ENCODE measurements at regions of chr14 and their contacts with region 1.

Region 1: GRCh38 chr14:92135267-92135666 is 13.5 kb downstream of the CPSF2 start:
- DNase-seq: peak; percentile 49
- H3K4me3 ChIP-seq: no peak overlapping the region
- H3K27ac ChIP-seq: no peak overlapping the region
- H3K4me1 ChIP-seq: no peaks in the 10 kb centered on the region
- H3K27me3 ChIP-seq: no peaks in the 10 kb centered on the region
- CTCF ChIP-seq: peak; percentile 14 to 35
- POLR2A ChIP-seq: no peak

Region 2: DNA sequence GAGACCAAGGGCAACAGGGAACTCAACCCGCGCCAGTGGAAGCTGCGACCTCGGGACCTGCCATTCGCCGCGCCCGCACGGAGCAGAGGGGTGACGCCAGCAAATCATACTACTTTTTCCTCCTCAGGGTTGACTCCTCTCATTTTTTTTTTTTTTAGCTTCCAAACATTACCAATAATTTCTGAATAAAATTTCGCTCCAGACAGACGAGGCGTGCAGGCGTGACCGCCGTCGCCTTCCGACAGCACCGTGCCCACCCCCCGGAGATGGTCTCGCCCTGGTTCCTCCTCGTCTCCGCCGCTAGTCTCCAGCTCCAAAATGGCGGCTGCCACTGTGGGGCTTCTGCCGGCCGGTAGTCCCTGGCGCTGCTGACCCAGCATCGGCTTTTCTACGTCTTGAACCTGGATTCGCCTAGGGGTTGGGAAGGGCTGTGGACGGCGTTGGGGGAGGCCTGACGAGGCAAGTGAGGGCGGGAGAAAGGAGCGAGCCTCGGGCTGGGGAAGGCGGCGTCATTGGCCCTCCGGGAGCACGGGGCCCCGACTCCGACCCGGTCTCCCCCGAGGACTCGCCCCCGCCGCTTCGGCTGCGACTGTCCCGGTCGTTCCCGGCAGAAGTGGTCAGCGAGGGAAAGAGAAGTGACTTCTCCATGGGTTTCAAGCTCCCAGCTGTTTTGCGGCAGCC is 13.5 kb before region 1 on chr14 and contains the starts of genes CPSF2 and NDUFB1:
- CTCF ChIA-PET with region 1: interaction called, 14 read pairs
- POLR2A ChIA-PET with region 1: no interaction called
- dilution Hi-C with region 1: no loop called
- intact Hi-C with region 1: no loop called
- DNase-seq: peak; percentile 84
- H3K4me3 ChIP-seq: peak within 1 kb of the TSS; percentile 40 to 89 (median 79)
- H3K27ac ChIP-seq: peak within 1 kb of the TSS; percentile 75
- H3K4me1 ChIP-seq: peaks cover 7% of the 10 kb centered on the region
- H3K27me3 ChIP-seq: no peaks in the 10 kb centered on the region
- CTCF ChIP-seq: no peak
- POLR2A ChIP-seq: peak; percentile 95
- total RNA-seq, gene CPSF2: 76.9 and 81.7 TPM in 2 replicates
- total RNA-seq, gene NDUFB1: 95.2 and 114 TPM in 2 replicates

Region 3: DNA sequence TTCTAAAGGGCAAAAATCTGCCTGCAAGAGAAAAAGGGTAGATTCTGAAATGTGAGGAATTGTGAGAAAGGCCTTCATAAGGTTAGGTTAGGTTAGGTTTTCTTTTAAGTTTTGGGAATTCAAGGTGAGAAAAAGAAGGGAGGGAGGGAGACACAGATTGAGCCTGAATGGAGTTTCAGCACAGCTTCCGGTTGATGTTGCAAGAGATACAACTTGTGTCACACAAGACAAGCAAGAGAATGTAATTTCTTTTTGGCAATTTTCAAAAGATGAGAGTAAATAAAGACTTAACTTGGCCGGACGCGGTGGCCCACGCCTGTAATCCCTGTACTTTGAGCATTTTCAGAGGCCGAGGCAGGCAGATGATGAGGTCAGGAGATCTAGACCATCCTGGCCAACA is 50.3 kb after region 1 on chr14:
- CTCF ChIA-PET with region 1: no interaction called
- POLR2A ChIA-PET with region 1: no interaction called
- dilution Hi-C with region 1: no loop called
- intact Hi-C with region 1: no loop called
- DNase-seq: no peak
- H3K4me3 ChIP-seq: no peak overlapping the region
- H3K27ac ChIP-seq: no peak overlapping the region
- H3K4me1 ChIP-seq: no peaks in the 10 kb centered on the region
- H3K27me3 ChIP-seq: no peaks in the 10 kb centered on the region
- CTCF ChIP-seq: no peak
- POLR2A ChIP-seq: no peak

Region 4: DNA sequence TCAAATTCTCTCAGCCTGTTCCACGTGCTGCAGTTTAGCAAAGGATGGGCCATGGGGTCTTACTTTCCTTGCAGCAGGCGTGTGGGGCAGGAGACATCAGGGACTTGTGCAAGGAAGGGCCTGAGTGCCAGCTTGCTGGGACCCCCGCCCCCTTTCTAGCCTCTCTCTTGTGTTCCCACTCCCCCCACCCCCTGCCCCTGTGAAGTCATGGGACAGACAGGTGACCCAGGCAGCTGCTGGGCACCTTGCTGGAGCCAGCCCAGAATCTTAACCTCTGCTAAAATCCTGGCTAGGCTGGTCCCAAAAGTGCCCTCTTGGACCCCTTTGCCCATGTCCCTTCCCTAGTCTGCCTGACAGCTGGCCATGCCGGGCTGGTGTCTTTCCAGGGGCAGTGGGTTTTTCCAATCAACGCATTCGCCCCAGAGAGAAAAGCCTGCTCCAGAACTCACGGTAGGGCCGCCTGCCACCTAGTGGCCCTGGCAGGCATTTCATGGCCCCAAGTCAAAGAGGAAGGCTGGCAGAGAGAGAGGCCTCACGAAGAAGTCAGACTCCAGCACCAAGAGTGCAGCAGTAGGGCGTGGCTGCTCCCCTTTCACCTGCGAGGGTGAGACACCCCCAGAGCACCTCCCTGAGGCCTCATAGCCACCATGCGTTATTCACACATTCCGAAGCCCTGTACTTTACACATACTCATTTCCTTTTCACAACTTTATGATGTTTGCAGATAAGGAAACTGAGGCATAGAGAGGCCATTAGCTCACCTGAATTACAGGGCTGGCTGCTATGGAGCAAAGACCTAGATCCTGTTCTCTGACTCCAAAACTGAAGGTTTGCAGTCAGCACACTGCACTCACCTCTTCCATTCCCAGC is 545.7 kb after region 1 on chr14:
- CTCF ChIA-PET with region 1: interaction called, 24 read pairs
- POLR2A ChIA-PET with region 1: no interaction called
- dilution Hi-C with region 1: no loop called
- intact Hi-C with region 1: loop called (anchors 1 kb)
- DNase-seq: peak; percentile 71
- H3K4me3 ChIP-seq: no peak overlapping the region
- H3K27ac ChIP-seq: no peak overlapping the region
- H3K4me1 ChIP-seq: peaks cover 4% of the 10 kb centered on the region
- H3K27me3 ChIP-seq: no peaks in the 10 kb centered on the region
- CTCF ChIP-seq: peak; percentile 89 to 94
- POLR2A ChIP-seq: no peak

Measured in endothelial cell of umbilical vein (primary cell).